MCF 10A (cell line): ENCODE measurements at regions of chr6 and their contacts with region 1.

Region 1: GRCh38 chr6:8063761-8064637 is at the start of gene BLOC1S5:
- DNase-seq: peak; percentile 96
- H3K4me3 Mint-ChIP-seq: peak within 1 kb of the TSS; percentile 86
- H3K27ac Mint-ChIP-seq: peak within 1 kb of the TSS; percentile 82
- H3K4me1 Mint-ChIP-seq: peaks cover 5% of the 10 kb centered on the region
- H3K27me3 Mint-ChIP-seq: no peaks in the 10 kb centered on the region
- CTCF ChIP-seq: no peak
- total RNA-seq, gene BLOC1S5: 7.7 and 10.9 TPM in 2 replicates

Region 2: GRCh38 chr6:7624796-7625710 is 438.9 kb before region 1 on chr6:
- CTCF ChIA-PET with region 1: no interaction called
- POLR2A ChIA-PET with region 1: no interaction called
- intact Hi-C with region 1: no loop called
- DNase-seq: no peak
- H3K4me3 Mint-ChIP-seq: no peak overlapping the region
- H3K27ac Mint-ChIP-seq: no peak overlapping the region
- H3K4me1 Mint-ChIP-seq: peaks cover 6% of the 10 kb centered on the region
- H3K27me3 Mint-ChIP-seq: no peaks in the 10 kb centered on the region
- CTCF ChIP-seq: no peak

Region 3: GRCh38 chr6:8085053-8085511 is 21.1 kb after region 1 on chr6:
- CTCF ChIA-PET with region 1: no interaction called
- POLR2A ChIA-PET with region 1: interaction called, 23 read pairs
- intact Hi-C with region 1: no loop called
- DNase-seq: peak; percentile 96
- H3K4me3 Mint-ChIP-seq: no peak overlapping the region
- H3K27ac Mint-ChIP-seq: peak overlapping the region; percentile 75
- H3K4me1 Mint-ChIP-seq: peaks cover 30% of the 10 kb centered on the region
- H3K27me3 Mint-ChIP-seq: no peaks in the 10 kb centered on the region
- CTCF ChIP-seq: no peak

Region 4: DNA sequence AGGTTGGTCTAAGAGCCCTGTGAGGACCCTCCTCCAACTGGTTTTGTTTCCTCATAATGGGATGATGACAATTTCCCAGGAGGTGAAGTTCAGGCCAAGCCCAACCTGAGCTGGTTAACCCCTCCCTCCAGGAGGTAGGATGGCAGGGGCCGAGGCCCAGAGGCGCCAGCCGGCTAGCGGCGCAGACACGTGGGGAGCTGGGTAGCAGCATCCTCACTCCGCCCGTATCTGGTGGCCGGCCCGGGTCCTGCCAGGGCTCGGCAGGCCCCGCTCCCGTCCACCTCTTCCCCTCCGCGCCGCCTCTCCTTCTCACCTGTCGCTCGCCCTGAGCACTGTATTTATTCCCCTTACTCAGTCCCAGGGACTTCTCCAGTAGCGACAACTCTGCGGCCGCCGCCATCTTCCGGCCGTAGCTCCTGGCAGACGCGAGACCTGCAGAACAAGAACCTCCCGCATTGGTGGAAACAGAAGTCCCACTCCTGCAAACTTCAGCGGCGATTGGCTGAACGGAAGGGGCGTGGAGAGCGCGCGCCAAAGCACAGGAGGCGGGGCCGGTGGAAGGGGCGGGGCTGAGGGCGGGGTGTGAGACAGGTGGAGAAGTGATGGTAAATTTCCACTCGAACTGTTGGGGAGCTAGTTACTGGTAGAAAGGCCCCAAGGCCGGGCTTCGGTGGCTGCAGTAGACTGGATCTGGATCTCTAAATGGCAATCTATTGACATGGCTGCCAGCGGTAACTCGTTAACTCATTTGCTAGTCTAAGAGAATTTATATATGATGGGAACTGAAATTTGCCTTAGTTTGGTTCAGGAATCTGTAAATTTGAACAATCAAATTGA is 38.3 kb after region 1 on chr6 and contains the start of gene EEF1E1:
- CTCF ChIA-PET with region 1: interaction called, 6 read pairs
- POLR2A ChIA-PET with region 1: interaction called, 28 read pairs
- intact Hi-C with region 1: no loop called
- DNase-seq: peak; percentile 96
- H3K4me3 Mint-ChIP-seq: peak within 1 kb of the TSS; percentile 92
- H3K27ac Mint-ChIP-seq: peak within 1 kb of the TSS; percentile 92
- H3K4me1 Mint-ChIP-seq: peaks cover 21% of the 10 kb centered on the region
- H3K27me3 Mint-ChIP-seq: no peaks in the 10 kb centered on the region
- CTCF ChIP-seq: no peak
- total RNA-seq, gene EEF1E1: 52.1 and 56.7 TPM in 2 replicates